ENCODE measurements at regions of chr1 and their contacts with region 1.

Region 1: DNA sequence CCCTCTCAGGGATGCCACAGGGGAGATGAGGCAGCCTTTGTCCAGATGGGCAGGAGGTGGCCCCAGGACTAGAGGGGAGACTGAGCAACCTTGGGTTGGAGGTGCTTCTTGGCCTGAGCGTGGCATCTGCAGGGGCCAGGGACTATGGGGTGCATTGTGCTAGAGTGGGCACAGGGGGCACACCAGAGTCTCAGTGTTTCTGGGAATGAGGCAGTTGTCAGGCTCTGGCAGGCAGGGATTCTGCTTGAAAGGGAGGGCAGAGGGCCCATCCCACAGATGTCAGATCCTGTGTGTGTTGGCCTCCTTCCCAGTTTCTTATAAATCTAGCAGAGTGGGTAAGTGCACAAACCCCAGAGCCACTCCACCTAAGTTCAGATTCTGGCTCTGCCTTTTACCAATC is 13.7 kb downstream of the LGR6 start:
- DNase-seq: peak; percentile 48

Region 2: DNA sequence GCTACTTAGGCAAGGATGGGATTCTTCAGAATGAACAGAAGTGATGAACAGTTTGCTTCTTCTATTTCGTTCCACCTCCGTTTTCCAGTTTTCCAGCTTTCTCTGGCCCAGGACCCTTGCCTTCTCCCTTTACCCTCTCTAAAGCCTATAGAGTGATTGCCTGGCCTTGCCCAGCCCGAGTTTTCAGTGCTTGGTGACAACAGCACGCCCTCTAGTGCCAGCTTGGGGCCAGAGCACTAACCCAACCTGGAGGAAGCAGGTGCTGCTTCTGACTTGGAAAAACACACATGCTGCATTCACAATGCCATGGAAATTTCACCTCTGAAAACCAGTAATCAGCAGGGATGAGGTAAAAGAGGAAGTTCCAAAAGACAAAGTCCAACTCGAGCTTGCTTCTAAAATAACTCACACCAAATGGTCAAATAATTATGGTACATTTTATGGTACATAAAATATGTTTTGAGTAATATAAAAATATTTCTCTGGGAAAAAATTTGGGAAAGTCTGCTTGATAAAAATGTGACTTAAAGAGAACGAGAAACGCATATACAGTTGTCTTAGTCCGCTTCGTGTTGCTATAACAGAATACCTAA is 108.4 kb after region 1 on chr1:
- in situ Hi-C with region 1: loop called (anchors 25 kb)
- DNase-seq: peak; percentile 76

Measured in ACHN (cell line).